ENCODE measurements at regions of chr16 and their contacts with region 1.

Region 1: DNA sequence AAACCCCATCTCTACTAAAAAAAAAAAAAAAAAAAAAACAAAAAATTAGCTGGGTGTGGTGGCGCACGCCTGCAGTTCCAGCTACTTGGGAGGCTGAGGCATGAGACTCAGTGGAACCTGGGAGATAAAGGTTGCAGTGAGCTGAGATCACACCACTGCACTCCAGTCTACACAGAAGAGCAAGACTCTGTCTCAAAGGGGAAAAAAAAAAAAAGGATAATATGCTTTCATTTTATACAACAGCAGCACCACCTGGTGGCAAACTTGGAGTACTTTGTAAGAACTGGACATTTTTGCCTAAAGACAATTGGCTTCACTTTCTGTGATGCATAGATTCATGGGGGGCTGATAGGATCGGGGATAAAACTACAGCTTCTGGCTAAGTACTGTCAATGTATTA is 8.5 kb downstream of the CHTF8 start:
- DNase-seq: peak; percentile 72 to 80 (median 75)
- ATAC-seq: peak; percentile 53
- H3K4me3 ChIP-seq: no peak overlapping the region
- H3K27ac ChIP-seq: no peak overlapping the region
- H3K4me1 ChIP-seq: peaks cover 15% of the 10 kb centered on the region
- H3K27me3 ChIP-seq: no peaks in the 10 kb centered on the region
- CTCF ChIP-seq: peak in 6 of 7 experiments; percentile 44 to 84 (median 77)
- POLR2A ChIP-seq: no peak

Region 2: GRCh38 chr16:68843482-68844210 is 280.3 kb before region 1 on chr16 and contains the start of gene TANGO6:
- intact Hi-C with region 1: loop called (anchors 10 kb)
- DNase-seq: peak; percentile 88 to 90 (median 89)
- ATAC-seq: peak; percentile 95
- H3K4me3 ChIP-seq: peak within 1 kb of the TSS; percentile 67 to 81
- H3K27ac ChIP-seq: peak within 1 kb of the TSS; percentile 35 to 77 (median 57)
- H3K4me1 ChIP-seq: peaks cover 8% of the 10 kb centered on the region
- H3K27me3 ChIP-seq: no peaks in the 10 kb centered on the region
- CTCF ChIP-seq: peak in 2 of 7 experiments; percentile 5 to 15
- POLR2A ChIP-seq: peak; percentile 46 to 89 (median 80)
- total RNA-seq, gene TANGO6: 9.6 to 22.7 TPM

Region 3: GRCh38 chr16:68902008-68902968 is 221.6 kb before region 1 on chr16:
- intact Hi-C with region 1: loop called (anchors 5 kb)
- DNase-seq: peak; percentile 51 to 67 (median 60)
- ATAC-seq: peak; percentile 74
- H3K4me3 ChIP-seq: no peak overlapping the region
- H3K27ac ChIP-seq: no peak overlapping the region
- H3K4me1 ChIP-seq: peaks cover under 1% of the 10 kb centered on the region
- H3K27me3 ChIP-seq: no peaks in the 10 kb centered on the region
- CTCF ChIP-seq: peak; percentile 50 to 86 (median 76)
- POLR2A ChIP-seq: no peak

Region 4: DNA sequence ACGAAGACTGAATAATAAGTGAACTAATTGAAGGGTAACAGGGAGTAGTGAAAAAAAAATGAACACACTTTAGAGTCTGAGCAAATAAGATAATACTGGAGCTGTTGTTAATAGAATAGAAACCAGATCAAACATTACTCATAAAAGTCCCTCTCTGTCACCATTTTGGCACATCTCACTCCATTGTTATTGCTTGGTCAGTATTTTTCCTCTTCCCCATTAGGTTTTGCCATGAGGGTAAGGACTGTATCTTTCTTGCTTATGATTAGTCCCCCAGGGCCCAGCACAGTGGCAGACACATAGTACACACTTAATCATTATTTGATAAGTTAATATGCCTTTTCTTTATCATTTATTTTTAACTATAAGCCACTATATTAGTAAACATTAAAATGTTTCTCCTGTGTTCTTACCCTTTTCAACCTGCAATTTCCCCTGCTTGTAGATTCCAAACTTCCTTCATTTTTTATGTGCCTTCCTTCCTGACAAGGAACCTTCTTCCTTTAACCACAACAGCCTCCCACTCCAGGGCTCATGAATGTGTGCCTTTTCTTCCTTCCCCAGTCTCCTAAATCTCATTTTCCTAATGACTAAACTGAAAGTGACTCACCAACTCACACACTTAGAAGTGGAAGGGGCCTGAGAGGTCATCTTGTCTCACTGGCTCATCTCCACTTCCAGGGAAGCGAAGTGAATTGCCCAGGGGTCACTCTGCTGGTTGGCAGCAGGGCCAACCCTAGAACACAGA is 106.7 kb before region 1 on chr16:
- intact Hi-C with region 1: no loop called
- DNase-seq: no peak
- ATAC-seq: peak; percentile 35
- H3K4me3 ChIP-seq: no peak overlapping the region
- H3K27ac ChIP-seq: peak overlapping the region in 1 of 4 donors; percentile 56
- H3K4me1 ChIP-seq: peaks cover 7% of the 10 kb centered on the region
- H3K27me3 ChIP-seq: no peaks in the 10 kb centered on the region
- CTCF ChIP-seq: no peak
- POLR2A ChIP-seq: no peak

Region 5: DNA sequence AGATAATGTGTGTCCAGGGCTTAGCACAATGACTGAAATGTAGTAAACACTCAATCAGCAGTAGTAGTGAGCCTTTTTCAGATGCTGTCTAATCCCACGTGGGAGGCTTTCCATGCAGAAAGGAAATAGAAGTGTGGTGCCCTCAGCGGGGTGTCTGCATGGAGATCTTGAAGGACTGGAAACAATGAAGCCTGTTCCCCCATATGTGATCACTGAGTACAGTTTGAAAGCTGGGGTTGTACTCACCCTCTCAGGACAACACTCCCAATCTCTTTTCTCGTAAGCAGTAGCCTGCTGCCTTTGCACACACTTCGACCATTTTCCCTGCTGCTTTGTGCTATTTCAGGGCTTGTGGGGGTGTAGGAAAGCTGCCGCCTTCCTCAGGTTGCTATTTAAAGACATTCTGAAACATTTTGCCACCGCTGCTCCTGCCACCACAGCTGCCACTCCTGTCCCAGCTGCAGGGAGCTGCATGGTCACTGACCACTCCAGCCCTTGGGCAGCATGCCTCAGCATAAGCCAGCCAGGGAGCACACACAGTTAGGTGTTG is 59.1 kb before region 1 on chr16:
- intact Hi-C with region 1: no loop called
- DNase-seq: no peak
- ATAC-seq: no peak
- H3K4me3 ChIP-seq: no peak overlapping the region
- H3K27ac ChIP-seq: no peak overlapping the region
- H3K4me1 ChIP-seq: no peaks in the 10 kb centered on the region
- H3K27me3 ChIP-seq: no peaks in the 10 kb centered on the region
- CTCF ChIP-seq: no peak
- POLR2A ChIP-seq: no peak

Region 6: GRCh38 chr16:69077251-69077650 is 46.7 kb before region 1 on chr16:
- intact Hi-C with region 1: no loop called
- DNase-seq: no peak
- ATAC-seq: no peak
- H3K4me3 ChIP-seq: no peak overlapping the region
- H3K27ac ChIP-seq: no peak overlapping the region
- H3K4me1 ChIP-seq: no peaks in the 10 kb centered on the region
- H3K27me3 ChIP-seq: no peaks in the 10 kb centered on the region
- CTCF ChIP-seq: no peak
- POLR2A ChIP-seq: no peak

Region 7: DNA sequence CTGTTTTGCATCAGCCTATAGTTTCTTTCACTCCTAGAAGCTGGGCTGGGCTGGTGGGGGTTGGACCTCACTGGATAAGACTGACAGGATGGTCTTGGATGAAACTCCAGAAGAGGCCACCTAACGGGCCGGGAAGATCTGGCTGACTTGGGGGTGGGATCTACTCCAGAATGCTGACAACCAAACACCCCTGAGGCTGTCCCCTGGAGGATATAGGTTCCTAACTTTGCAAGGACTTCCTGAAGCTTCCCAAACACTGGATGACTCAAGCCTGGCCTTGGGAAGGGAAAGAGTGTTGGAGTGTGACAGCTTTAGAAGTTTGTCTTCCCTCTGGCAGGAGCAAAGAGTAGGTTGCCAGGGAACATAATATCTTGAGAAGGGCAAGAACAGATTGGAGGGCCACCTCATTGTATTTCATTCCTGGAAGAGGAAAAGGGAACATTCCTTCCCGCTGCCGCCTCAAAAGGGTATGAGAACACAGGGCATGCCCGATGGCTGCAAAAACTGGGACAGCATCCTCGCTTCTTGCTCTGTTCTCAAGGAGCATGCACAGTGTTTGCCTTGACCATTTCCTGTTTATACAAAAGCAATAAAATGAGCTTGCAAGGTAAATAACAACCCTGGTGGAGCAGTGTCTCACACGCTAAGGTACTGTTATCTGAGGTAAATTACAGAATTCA is 293.8 kb after region 1 on chr16:
- intact Hi-C with region 1: no loop called
- DNase-seq: no peak
- ATAC-seq: no peak
- H3K4me3 ChIP-seq: no peak overlapping the region
- H3K27ac ChIP-seq: no peak overlapping the region
- H3K4me1 ChIP-seq: no peaks in the 10 kb centered on the region
- H3K27me3 ChIP-seq: no peaks in the 10 kb centered on the region
- CTCF ChIP-seq: no peak
- POLR2A ChIP-seq: no peak

Measured in body of pancreas (tissue), 4 donors.